Activated CD4-positive, alpha-beta memory T cell treated with anti-CD3 and anti-CD28 coated beads for 36 hours (primary cell): ENCODE measurements at regions of chr4 and their contacts with region 1.

Region 1: DNA sequence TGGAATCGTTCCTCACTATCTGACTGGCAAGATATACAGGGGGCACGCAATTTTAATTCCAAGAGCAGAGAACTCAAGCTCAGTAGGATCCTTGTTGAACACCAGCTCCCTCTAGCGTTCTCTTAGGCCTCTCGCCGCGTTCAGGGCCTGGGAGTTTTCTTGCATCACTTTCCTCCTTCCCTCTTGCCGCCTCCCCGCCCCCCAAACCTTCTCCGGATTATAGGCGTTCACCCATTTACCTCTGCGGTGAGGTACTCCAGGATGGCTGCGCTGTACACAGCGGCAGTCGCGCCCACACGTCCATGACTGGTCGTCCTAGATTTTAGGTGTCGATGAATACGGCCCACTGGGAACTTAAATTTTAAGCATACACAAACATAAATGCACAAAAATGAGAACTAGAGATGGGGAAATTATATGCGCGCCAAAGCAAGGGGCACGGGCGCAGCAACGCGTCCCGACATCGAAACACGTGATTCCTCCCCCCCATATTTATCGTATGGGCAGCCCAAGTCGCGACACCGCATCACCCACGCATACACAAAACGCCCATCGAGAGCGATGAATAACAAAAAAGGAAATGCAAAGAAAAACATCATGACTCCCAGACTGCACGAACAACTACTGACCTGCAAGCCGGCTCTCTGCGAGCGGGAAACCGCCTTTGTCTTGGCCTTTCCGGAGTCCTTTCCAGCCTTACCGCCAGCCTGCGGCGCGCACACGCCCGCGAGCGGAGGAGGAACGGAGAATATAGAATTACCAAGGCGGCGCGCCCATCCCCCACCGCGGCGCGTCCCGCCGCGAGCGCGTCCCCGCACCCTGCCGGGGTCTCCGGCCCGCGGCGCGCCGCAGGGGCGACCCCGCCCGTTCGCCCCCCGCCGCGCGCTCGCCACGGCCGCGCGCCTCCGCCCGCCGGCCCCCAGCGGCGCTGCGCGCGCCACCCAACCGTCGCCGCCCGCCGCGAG is 759 bp downstream of the H2AZ1 start:
- DNase-seq: peak; percentile 95
- H3K4me3 Mint-ChIP-seq: no peak overlapping the region
- H3K27ac Mint-ChIP-seq: no peak overlapping the region
- H3K4me1 Mint-ChIP-seq: peaks cover 35% of the 10 kb centered on the region
- H3K27me3 Mint-ChIP-seq: no peaks in the 10 kb centered on the region

Region 2: GRCh38 chr4:98658287-98659105 is 1290.8 kb before region 1 on chr4 and contains the start of gene TSPAN5:
- CTCF ChIA-PET with region 1: no interaction called
- POLR2A ChIA-PET with region 1: no interaction called
- intact Hi-C with region 1: loop called (anchors 10 kb)
- DNase-seq: peak; percentile 87
- H3K4me3 Mint-ChIP-seq: peak within 1 kb of the TSS; percentile 87
- H3K27ac Mint-ChIP-seq: peak within 1 kb of the TSS; percentile 79
- H3K4me1 Mint-ChIP-seq: peaks cover 78% of the 10 kb centered on the region
- H3K27me3 Mint-ChIP-seq: no peaks in the 10 kb centered on the region
- total RNA-seq, gene TSPAN5: 19.2 to 20.4 TPM

Region 3: DNA sequence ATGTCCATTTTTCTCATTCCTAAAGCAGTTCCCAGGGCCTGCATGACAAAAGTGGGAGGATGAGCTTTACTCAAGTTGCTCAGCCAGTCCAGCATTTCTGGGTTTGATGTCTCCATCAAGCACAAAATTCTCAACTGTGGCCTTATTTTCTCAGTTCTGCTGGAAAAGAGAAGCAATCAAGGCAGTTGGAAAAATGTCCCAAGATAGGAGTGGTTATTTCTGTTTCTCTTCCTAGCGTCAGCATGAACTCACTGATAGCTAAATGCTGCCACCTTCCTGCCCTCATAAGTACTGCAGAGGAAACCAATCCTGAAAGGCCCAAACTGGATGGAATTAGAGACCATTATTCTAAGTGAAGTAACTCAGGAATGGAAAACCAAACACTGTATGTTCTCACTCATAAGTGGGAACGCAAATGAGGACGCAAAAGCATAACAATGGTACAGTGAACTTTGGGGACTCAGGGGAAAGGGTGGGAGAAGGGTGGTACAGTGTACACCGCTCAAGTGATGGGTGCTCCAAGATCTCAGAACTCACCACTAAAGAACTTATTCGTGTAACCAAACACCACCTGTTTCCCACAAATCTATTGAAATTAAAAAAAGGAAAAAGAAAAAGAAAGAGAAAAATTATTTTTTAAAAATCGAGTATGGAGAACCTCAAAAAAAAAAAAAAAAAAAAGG is 543.7 kb before region 1 on chr4:
- CTCF ChIA-PET with region 1: no interaction called
- POLR2A ChIA-PET with region 1: no interaction called
- intact Hi-C with region 1: loop called (anchors 10 kb)
- DNase-seq: peak; percentile 66
- H3K4me3 Mint-ChIP-seq: no peak overlapping the region
- H3K27ac Mint-ChIP-seq: no peak overlapping the region
- H3K4me1 Mint-ChIP-seq: peaks cover 18% of the 10 kb centered on the region
- H3K27me3 Mint-ChIP-seq: peaks cover 2% of the 10 kb centered on the region

Region 4: GRCh38 chr4:99763635-99764101 is 185.6 kb before region 1 on chr4:
- CTCF ChIA-PET with region 1: no interaction called
- POLR2A ChIA-PET with region 1: no interaction called
- intact Hi-C with region 1: loop called (anchors 2 kb)
- DNase-seq: peak; percentile 38
- H3K4me3 Mint-ChIP-seq: no peak overlapping the region
- H3K27ac Mint-ChIP-seq: no peak overlapping the region
- H3K4me1 Mint-ChIP-seq: peaks cover 24% of the 10 kb centered on the region
- H3K27me3 Mint-ChIP-seq: peaks cover 12% of the 10 kb centered on the region

Region 5: DNA sequence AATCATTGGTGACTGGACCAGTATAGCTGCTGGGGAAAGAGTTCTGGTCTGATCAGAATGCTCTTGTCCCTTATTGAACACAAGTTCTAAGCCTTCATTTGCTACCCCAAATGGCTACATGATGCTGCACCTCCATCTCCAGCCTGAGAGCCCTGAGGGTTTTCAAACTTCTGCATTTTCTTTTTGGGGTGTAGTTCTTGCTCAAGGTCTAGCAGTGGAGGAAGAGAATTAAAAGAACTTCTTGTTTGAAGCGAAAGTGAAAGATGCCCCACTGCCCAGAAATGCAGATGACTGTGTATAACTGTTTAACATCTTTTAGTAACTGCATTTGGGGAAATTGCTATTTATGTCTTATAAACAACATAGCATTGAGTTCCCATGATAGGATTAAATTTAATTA is 93.6 kb before region 1 on chr4:
- CTCF ChIA-PET with region 1: interaction called, 3 read pairs
- POLR2A ChIA-PET with region 1: interaction called, 13 read pairs
- intact Hi-C with region 1: loop called (anchors 1 kb)
- DNase-seq: peak; percentile 37
- H3K4me3 Mint-ChIP-seq: no peak overlapping the region
- H3K27ac Mint-ChIP-seq: peak overlapping the region; percentile 7
- H3K4me1 Mint-ChIP-seq: peaks cover 70% of the 10 kb centered on the region
- H3K27me3 Mint-ChIP-seq: no peaks in the 10 kb centered on the region

Region 6: GRCh38 chr4:99921174-99921573 is 28.1 kb before region 1 on chr4:
- CTCF ChIA-PET with region 1: interaction called, 5 read pairs
- POLR2A ChIA-PET with region 1: no interaction called
- intact Hi-C with region 1: loop called (anchors 2 kb)
- DNase-seq: no peak
- H3K4me3 Mint-ChIP-seq: no peak overlapping the region
- H3K27ac Mint-ChIP-seq: no peak overlapping the region
- H3K4me1 Mint-ChIP-seq: peaks cover 16% of the 10 kb centered on the region
- H3K27me3 Mint-ChIP-seq: no peaks in the 10 kb centered on the region

Region 7: GRCh38 chr4:100280807-100281206 is 331.5 kb after region 1 on chr4:
- CTCF ChIA-PET with region 1: no interaction called
- POLR2A ChIA-PET with region 1: no interaction called
- intact Hi-C with region 1: no loop called
- DNase-seq: no peak
- H3K4me3 Mint-ChIP-seq: no peak overlapping the region
- H3K27ac Mint-ChIP-seq: no peak overlapping the region
- H3K4me1 Mint-ChIP-seq: no peaks in the 10 kb centered on the region
- H3K27me3 Mint-ChIP-seq: peaks cover 2% of the 10 kb centered on the region